ENCODE measurements at regions of chr7 and their contacts with region 1.

Region 1: DNA sequence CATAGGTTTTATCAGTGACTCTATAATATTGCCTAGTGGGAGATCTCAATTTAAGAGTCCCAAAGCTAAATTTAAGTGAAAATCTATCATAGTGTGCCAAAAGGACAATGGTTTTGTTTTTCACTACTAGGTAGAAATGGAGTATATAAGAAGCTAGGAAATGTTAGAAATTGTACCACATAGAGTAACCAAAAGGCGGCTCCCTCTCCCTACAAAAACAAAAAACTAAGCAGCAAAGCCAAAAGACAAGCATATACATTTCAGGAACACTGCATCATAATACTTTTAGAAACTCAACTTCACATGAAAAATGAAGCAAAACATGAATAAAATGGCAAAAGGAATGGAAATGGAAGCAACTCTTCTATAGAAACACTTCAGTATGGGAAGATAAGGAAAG is 271.6 kb downstream of the CACNA2D1 start:
- DNase-seq: no peak
- ATAC-seq: no peak
- H3K4me3 ChIP-seq: no peak overlapping the region
- H3K27ac ChIP-seq: no peak overlapping the region
- H3K4me1 ChIP-seq: peaks cover 16 to 32% of the 10 kb centered on the region in 2 donors
- H3K27me3 ChIP-seq: no peaks in the 10 kb centered on the region
- CTCF ChIP-seq: no peak
- POLR2A ChIP-seq: no peak

Region 2: DNA sequence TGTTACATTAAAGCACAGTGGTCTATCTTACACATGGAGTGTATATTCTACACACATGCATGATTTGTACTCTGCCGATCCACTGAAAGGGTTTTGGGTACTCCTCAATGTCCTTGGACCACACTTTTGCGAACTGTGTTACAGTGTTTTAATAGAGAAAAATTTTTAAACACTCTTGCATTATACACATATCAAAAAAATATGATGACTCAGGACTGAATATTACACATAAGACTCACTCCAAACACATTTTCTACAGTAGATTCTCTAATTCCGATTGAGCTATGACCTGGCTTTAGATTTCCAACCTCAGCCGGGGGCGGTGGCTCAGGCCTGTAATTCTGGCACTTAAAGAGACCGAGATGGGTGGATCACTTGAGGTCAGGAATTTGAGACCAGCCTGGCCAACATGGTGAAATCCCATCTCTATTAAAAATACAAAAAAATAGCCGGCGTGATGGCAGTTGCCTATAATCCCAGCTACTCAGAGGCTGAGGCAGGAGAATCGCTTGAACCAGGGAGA is 49.2 kb after region 1 on chr7:
- in situ Hi-C with region 1: loop called in 1 of 4 experiments (anchors 10 kb)
- intact Hi-C with region 1: no loop called
- DNase-seq: no peak
- ATAC-seq: peak in 1 of 2 donors; percentile 69
- H3K4me3 ChIP-seq: no peak overlapping the region
- H3K27ac ChIP-seq: peak overlapping the region in 2 of 4 donors; percentile 43 to 56
- H3K4me1 ChIP-seq: peaks cover 21 to 28% of the 10 kb centered on the region in 2 donors
- H3K27me3 ChIP-seq: no peaks in the 10 kb centered on the region
- CTCF ChIP-seq: no peak
- POLR2A ChIP-seq: no peak

Region 3: DNA sequence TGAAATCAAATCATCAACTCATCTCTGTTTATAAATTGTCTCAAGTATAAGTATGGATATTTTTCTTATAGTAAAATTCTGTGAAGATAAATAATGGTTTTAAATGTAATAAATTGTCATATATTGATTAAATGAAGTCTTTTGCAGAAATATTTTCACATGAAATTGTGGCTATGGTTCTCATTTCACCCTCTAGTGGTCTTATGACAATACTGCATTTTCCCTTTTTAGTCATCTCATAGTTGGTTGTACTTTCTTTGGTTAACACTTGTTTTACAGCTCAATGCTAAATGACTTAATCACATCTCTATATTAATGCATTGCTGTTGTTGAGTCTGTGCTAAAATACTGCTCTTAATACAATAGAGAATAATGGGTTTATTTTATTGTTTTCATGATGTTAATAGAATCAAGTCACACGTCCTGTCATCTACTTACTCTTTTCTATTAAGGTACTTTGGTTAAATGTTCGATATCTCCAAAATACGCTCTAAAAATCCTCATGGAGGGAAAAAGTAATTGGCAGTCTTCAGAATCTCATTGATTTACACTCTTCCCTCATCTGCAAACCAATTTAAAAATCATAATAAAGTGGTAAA is 309.6 kb after region 1 on chr7:
- in situ Hi-C with region 1: no loop called
- intact Hi-C with region 1: loop called (anchors 10 kb)
- DNase-seq: no peak
- ATAC-seq: no peak
- H3K4me3 ChIP-seq: no peak overlapping the region
- H3K27ac ChIP-seq: no peak overlapping the region
- H3K4me1 ChIP-seq: peaks cover 22 to 24% of the 10 kb centered on the region in 2 donors
- H3K27me3 ChIP-seq: no peaks in the 10 kb centered on the region
- CTCF ChIP-seq: peak; percentile 48 to 87 (median 77)
- POLR2A ChIP-seq: no peak

Region 4: GRCh38 chr7:83575436-83575835 is 1403.4 kb after region 1 on chr7:
- in situ Hi-C with region 1: no loop called
- intact Hi-C with region 1: no loop called
- DNase-seq: no peak
- ATAC-seq: no peak
- H3K4me3 ChIP-seq: no peak overlapping the region
- H3K27ac ChIP-seq: no peak overlapping the region
- H3K4me1 ChIP-seq: no peaks in the 10 kb centered on the region
- H3K27me3 ChIP-seq: no peaks in the 10 kb centered on the region
- CTCF ChIP-seq: no peak
- POLR2A ChIP-seq: no peak

Measured in gastrocnemius medialis (tissue), 4 donors.